IMR-90 (cell line): ENCODE measurements at regions of chr13 and their contacts with region 1.

Region 1: DNA sequence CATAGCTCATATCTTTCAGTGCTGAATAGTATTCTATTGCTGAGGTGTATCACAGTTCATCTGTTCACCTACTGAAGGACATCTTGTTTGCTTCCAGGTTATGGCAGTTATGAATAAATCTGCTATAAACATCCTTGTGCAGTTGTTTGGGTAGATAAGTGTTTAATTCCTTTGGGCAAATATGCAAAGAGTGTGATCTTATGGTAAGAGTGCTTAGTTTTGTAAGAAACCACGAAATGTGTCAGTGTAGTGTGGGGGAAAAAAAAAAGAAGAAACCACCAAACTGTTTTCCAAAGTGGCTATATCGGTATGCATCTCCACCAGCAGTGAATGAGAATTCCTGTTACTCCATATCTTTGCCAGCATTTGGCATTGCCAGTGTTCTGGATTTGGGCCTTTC is 93.3 kb downstream of the PIBF1 start:
- DNase-seq: no peak
- ATAC-seq: no peak
- H3K4me3 ChIP-seq: no peak overlapping the region
- H3K27ac ChIP-seq: no peak overlapping the region
- H3K4me1 ChIP-seq: no peaks in the 10 kb centered on the region
- H3K27me3 ChIP-seq: no peaks in the 10 kb centered on the region
- CTCF ChIP-seq: no peak
- POLR2A ChIP-seq: no peak
- RAD21 ChIP-seq: no peak

Region 2: DNA sequence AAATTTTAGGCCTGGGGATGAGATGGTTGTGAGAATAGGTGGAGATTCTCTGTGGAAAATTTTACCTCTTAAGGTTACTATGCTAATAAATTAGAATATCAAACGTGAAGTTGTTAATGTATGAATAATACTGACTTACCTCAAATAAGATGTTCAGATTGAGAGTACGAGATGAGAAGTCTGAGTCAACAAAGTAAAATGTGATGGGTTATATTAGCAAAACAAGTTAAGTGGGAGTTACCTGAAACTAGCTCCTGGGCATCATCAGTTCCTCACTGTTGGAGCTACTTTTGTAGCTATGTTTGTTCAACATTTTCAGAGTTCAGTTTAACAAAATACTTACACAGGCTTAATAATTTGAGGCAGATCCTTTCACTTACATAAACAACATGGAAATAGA is 15.3 kb after region 1 on chr13:
- CTCF ChIA-PET with region 1: no interaction called
- POLR2A ChIA-PET with region 1: no interaction called
- dilution Hi-C with region 1: no loop called
- in situ Hi-C with region 1: no loop called
- intact Hi-C with region 1: loop called (anchors 1 kb)
- DNase-seq: no peak
- ATAC-seq: no peak
- H3K4me3 ChIP-seq: no peak overlapping the region
- H3K27ac ChIP-seq: no peak overlapping the region
- H3K4me1 ChIP-seq: peaks cover 2% of the 10 kb centered on the region; the same call in 1 of the 2 replicates
- H3K27me3 ChIP-seq: no peaks in the 10 kb centered on the region
- CTCF ChIP-seq: no peak
- POLR2A ChIP-seq: no peak
- RAD21 ChIP-seq: no peak